Gastrocnemius medialis (tissue), 4 donors: ENCODE measurements at regions of chr19 and their contacts with region 1.

Region 1: GRCh38 chr19:8307965-8308866 is at the start of gene CD320:
- DNase-seq: peak; percentile 74 to 84
- ATAC-seq: peak; percentile 92 to 93
- H3K4me3 ChIP-seq: peak within 1 kb of the TSS; percentile 62 to 76 (median 66)
- H3K27ac ChIP-seq: peak within 1 kb of the TSS; percentile 81 to 93 (median 84)
- H3K4me1 ChIP-seq: peaks cover 27 to 31% of the 10 kb centered on the region in 2 donors
- H3K27me3 ChIP-seq: no peaks in the 10 kb centered on the region
- CTCF ChIP-seq: peak in 1 of 5 experiments; percentile 14
- POLR2A ChIP-seq: peak; percentile 72 to 75
- total RNA-seq, gene CD320: 49.8 to 85.3 (median 66.1) TPM

Region 2: GRCh38 chr19:8180061-8180460 is 128.2 kb before region 1 on chr19:
- in situ Hi-C with region 1: no loop called
- intact Hi-C with region 1: no loop called
- DNase-seq: no peak
- ATAC-seq: no peak
- H3K4me3 ChIP-seq: no peak overlapping the region
- H3K27ac ChIP-seq: no peak overlapping the region
- H3K4me1 ChIP-seq: no peaks in the 10 kb centered on the region
- H3K27me3 ChIP-seq: no peaks in the 10 kb centered on the region
- CTCF ChIP-seq: no peak
- POLR2A ChIP-seq: no peak

Region 3: GRCh38 chr19:8269724-8270123 is 38.5 kb before region 1 on chr19:
- in situ Hi-C with region 1: loop called in 1 of 4 experiments (anchors 5 kb)
- intact Hi-C with region 1: no loop called
- DNase-seq: no peak
- ATAC-seq: no peak
- H3K4me3 ChIP-seq: no peak overlapping the region
- H3K27ac ChIP-seq: no peak overlapping the region
- H3K4me1 ChIP-seq: peaks cover 0 to 3% of the 10 kb centered on the region in 2 donors
- H3K27me3 ChIP-seq: no peaks in the 10 kb centered on the region
- CTCF ChIP-seq: no peak
- POLR2A ChIP-seq: no peak

Region 4: DNA sequence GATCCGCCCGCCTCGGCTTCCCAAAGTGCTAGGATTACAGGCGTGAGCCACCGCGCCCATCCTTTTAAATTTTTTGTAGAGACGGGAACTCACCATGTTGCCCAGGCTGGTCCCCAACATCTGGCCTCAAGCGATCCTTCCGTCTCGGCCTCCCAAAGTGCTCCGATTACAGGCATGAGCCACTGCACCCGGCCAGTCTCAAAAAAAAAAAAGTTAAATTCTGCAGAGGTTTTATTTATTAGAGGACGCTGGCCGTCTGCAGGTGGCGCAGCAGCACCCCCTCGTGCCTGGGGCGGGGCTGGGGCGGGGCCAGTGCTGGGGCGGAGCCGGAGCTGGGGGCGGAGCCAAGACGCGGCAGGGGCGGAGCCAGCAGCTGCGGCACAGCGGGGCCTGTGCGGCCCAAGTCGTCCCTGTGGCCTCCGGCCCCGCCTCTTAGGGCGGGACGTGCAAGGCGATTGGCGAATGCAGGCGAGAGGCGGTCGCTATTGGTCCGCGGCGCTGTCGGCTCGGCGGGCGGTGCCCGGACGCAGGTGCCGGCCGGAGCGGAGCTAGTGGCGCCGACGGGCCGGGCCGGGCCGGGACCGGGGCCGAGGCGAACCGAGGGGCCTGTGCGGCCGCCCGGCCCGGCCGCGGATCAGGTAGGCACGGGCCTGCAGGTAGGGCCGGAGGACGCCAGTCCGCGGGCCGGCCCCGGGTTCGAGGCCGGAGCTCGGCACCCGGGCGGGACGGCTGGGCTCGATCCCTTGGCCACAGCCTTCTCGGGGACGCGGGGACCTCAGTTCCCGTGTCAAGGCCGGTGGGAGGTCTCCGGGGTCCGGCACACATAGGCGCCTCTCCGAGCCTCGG is 104.8 kb after region 1 on chr19 and contains the start of gene MARCHF2:
- in situ Hi-C with region 1: no loop called
- intact Hi-C with region 1: no loop called
- DNase-seq: peak; percentile 93 to 97
- ATAC-seq: peak; percentile 98 to 99
- H3K4me3 ChIP-seq: peak within 1 kb of the TSS; percentile 67 to 83 (median 69)
- H3K27ac ChIP-seq: peak within 1 kb of the TSS; percentile 65 to 86 (median 76)
- H3K4me1 ChIP-seq: peaks cover 14 to 27% of the 10 kb centered on the region in 2 donors
- H3K27me3 ChIP-seq: no peaks in the 10 kb centered on the region
- CTCF ChIP-seq: peak; percentile 14 to 84 (median 62)
- POLR2A ChIP-seq: peak; percentile 63 to 74
- total RNA-seq, gene MARCHF2: 173 to 183 (median 176) TPM

Region 5: DNA sequence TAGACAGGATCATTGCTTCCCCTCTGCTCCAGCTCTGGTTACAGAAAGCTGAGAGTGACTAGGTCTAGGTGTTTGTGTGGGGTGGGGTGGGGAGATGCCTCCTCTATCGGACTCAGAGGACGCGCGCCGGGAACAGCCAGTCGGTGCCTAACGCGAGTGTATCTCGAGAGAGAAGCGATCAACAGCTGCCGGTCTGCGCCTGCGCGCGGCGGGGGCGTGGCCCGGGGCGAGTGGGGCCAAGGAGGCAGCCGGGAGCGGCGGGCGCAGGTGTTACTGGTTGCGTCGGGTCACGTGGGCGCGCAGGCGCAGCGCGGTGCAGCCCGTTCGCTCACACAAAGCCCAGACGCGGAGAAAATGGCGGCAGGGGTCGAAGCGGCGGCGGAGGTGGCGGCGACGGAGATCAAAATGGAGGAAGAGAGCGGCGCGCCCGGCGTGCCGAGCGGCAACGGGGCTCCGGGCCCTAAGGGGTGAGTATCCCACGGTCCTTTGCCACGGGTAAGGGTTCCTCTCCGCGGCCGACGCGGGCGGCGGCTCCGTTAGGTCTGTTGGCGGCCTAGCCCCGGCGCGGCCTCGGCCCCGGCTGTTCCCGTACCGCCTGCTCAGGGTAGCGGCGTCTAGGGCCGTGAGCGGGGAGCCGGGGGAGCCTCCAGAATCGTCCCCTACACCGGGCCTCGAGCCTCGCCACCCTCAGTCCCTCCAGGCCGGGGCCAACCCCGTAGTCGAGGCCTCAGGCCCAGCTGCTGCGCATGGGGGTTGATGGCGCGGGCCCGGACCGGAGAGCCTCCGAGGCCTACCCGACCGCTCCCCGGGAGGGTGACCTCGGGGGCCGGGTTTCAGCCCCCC is 136.7 kb after region 1 on chr19 and contains the start of gene HNRNPM:
- in situ Hi-C with region 1: no loop called
- intact Hi-C with region 1: no loop called
- DNase-seq: peak; percentile 98 to 99
- ATAC-seq: peak; percentile 93 to 94
- H3K4me3 ChIP-seq: peak within 1 kb of the TSS; percentile 86 to 92 (median 90)
- H3K27ac ChIP-seq: peak within 1 kb of the TSS; percentile 91 to 98 (median 97)
- H3K4me1 ChIP-seq: peaks cover 38 to 41% of the 10 kb centered on the region in 2 donors
- H3K27me3 ChIP-seq: no peaks in the 10 kb centered on the region
- CTCF ChIP-seq: no peak
- POLR2A ChIP-seq: peak; percentile 97
- total RNA-seq, gene HNRNPM: 42.5 to 74.6 (median 57.8) TPM